Natural killer cell (primary cell): ENCODE measurements at regions of chr3 and their contacts with region 1.

Region 1: GRCh38 chr3:27357665-27358258 is 11.4 kb downstream of the NEK10 start:
- DNase-seq: peak in 1 of 2 donors; percentile 80
- ATAC-seq: peak; percentile 89 to 99 (median 96)
- H3K4me3 ChIP-seq: no peak overlapping the region
- H3K4me3 Mint-ChIP-seq: peak overlapping the region; percentile 4
- H3K27ac ChIP-seq: no peak overlapping the region
- H3K27ac Mint-ChIP-seq: no peak overlapping the region
- H3K4me1 ChIP-seq: peaks cover 5% of the 10 kb centered on the region
- H3K4me1 Mint-ChIP-seq: peaks cover 7 to 23% of the 10 kb centered on the region in 2 donors
- H3K27me3 ChIP-seq: no peaks in the 10 kb centered on the region
- H3K27me3 Mint-ChIP-seq: no peaks in the 10 kb centered on the region
- CTCF ChIP-seq: peak; percentile 68

Region 2: GRCh38 chr3:27467545-27467944 is 109.8 kb after region 1 on chr3:
- intact Hi-C with region 1: loop called (anchors 1 kb)
- DNase-seq: peak in 1 of 2 donors; percentile 68
- ATAC-seq: peak; percentile 86 to 97 (median 96)
- H3K4me3 ChIP-seq: no peak overlapping the region
- H3K4me3 Mint-ChIP-seq: no peak overlapping the region
- H3K27ac ChIP-seq: no peak overlapping the region
- H3K27ac Mint-ChIP-seq: peak overlapping the region; percentile 34 to 48
- H3K4me1 ChIP-seq: no peaks in the 10 kb centered on the region
- H3K4me1 Mint-ChIP-seq: peaks cover 7 to 14% of the 10 kb centered on the region in 2 donors
- H3K27me3 ChIP-seq: no peaks in the 10 kb centered on the region
- H3K27me3 Mint-ChIP-seq: no peaks in the 10 kb centered on the region
- CTCF ChIP-seq: peak; percentile 62

Region 3: DNA sequence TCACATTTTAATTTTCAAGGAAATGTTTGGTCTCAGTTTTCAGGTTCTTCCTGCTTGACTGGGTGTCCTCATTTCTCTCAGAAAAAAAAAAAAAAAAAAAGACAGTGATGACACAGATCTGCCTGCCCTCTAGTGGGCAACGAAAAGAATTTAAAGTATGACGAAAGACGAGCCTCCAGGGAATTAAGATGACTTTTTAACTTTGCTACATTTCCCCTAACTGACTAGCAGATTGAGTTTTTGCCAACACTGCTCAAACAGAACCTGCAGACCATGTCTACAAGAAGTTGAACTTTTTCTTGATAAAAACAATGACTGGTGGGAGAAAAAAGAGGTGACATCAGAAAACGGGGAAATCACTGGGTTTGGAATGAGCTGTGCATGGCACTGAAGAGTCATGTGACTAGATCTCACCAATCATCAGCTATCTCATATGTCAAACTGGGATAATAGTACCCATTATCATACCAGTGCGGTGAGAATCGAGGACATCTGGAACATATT is 323.5 kb after region 1 on chr3:
- intact Hi-C with region 1: loop called (anchors 1 kb)
- DNase-seq: peak in 1 of 2 donors; percentile 85
- ATAC-seq: peak; percentile 73 to 89 (median 88)
- H3K4me3 ChIP-seq: no peak overlapping the region
- H3K4me3 Mint-ChIP-seq: peak overlapping the region; percentile 47
- H3K27ac ChIP-seq: no peak overlapping the region
- H3K27ac Mint-ChIP-seq: peak overlapping the region in 1 of 2 donors; percentile 58
- H3K4me1 ChIP-seq: peaks cover 4% of the 10 kb centered on the region
- H3K4me1 Mint-ChIP-seq: peaks cover 6% of the 10 kb centered on the region in 2 donors
- H3K27me3 ChIP-seq: no peaks in the 10 kb centered on the region
- H3K27me3 Mint-ChIP-seq: peaks cover 2 to 10% of the 10 kb centered on the region in 2 donors
- CTCF ChIP-seq: peak; percentile 87

Region 4: DNA sequence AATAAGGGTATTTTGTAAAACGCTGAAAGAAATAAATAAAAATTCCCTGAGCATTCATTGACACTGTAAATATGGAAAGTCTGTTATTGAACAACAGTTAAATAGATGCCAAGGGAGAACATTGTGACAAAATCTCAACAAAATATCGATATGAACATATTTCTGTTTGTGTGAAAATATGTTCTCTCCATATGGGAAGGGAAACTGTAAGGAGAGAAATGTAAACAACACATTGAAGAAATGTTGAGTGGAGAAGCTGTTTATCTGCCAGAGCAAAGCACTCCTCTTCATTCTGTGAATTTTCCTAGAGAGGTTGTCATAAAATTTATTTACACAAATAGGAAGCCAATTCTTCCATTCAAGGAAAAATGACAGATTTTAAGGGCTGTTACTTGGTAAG is 421.4 kb after region 1 on chr3:
- intact Hi-C with region 1: no loop called
- DNase-seq: no peak
- ATAC-seq: no peak
- H3K4me3 ChIP-seq: no peak overlapping the region
- H3K4me3 Mint-ChIP-seq: no peak overlapping the region
- H3K27ac ChIP-seq: no peak overlapping the region
- H3K27ac Mint-ChIP-seq: no peak overlapping the region
- H3K4me1 ChIP-seq: no peaks in the 10 kb centered on the region
- H3K4me1 Mint-ChIP-seq: no peaks in the 10 kb centered on the region
- H3K27me3 ChIP-seq: no peaks in the 10 kb centered on the region
- H3K27me3 Mint-ChIP-seq: peaks cover 18 to 48% of the 10 kb centered on the region in 2 donors
- CTCF ChIP-seq: no peak